ENCODE measurements at regions of chr5 and their contacts with region 1.

Region 1: GRCh38 chr5:59673438-59674058 is 220.0 kb downstream of the PDE4D start:
- DNase-seq: no peak
- ATAC-seq: no peak
- H3K4me3 ChIP-seq: no peak overlapping the region
- H3K27ac ChIP-seq: no peak overlapping the region
- H3K4me1 ChIP-seq: no peaks in the 10 kb centered on the region
- H3K27me3 ChIP-seq: no peaks in the 10 kb centered on the region
- CTCF ChIP-seq: peak; percentile 70 to 88 (median 84)

Region 2: GRCh38 chr5:59506285-59506877 is 167.2 kb before region 1 on chr5:
- intact Hi-C with region 1: loop called (anchors 1 to 10 kb)
- DNase-seq: no peak
- ATAC-seq: no peak
- H3K4me3 ChIP-seq: no peak overlapping the region
- H3K27ac ChIP-seq: no peak overlapping the region
- H3K4me1 ChIP-seq: no peaks in the 10 kb centered on the region
- H3K27me3 ChIP-seq: no peaks in the 10 kb centered on the region
- CTCF ChIP-seq: peak; percentile 28 to 78 (median 58)

Region 3: DNA sequence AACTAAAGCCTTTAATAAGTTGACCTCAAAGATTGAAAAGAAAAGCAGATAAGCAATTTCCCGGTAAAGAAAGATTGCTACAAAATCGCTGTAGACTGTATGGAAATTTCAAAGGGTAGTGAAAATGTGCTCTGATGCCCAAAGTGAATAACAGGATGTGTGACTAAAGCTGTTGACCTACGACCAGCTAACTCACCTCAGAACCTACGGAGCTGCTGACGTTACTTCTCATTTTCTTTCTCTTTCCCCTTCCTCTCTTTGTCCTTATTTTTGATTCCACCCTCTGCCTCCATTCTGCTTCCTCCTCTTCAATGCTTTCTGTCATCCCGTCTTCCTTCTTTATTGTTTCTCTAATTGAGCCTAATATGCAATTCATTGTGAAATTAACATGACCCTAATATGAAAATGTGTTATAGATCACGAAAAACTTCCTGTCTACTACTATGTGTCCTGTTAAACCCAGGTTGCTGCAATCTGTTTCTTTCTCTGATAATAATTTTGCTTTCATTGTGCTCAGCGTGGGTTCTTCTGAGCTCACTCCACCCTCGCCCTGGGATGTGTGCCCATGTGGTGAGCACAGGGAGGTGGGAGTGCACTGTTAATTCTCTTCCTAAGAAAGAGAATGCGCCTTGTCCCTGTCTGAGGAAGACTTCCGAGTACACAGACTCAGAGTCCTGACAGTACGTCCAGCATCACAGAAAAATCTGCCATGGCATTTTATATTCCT is 117.0 kb after region 1 on chr5:
- intact Hi-C with region 1: loop called in 7 of 10 experiments (anchors 5 to 10 kb)
- DNase-seq: no peak
- ATAC-seq: peak in 6 of 8 donors; percentile 38 to 91 (median 78)
- H3K4me3 ChIP-seq: peak overlapping the region in 4 of 10 donors; percentile 1 to 31 (median 8)
- H3K27ac ChIP-seq: peak overlapping the region in 9 of 10 donors; percentile 1 to 70 (median 49)
- H3K4me1 ChIP-seq: peaks cover 0 to 11% (median 0%) of the 10 kb centered on the region in 9 donors
- H3K27me3 ChIP-seq: peaks cover 0 to 12% (median 0%) of the 10 kb centered on the region in 7 donors
- CTCF ChIP-seq: no peak

Region 4: DNA sequence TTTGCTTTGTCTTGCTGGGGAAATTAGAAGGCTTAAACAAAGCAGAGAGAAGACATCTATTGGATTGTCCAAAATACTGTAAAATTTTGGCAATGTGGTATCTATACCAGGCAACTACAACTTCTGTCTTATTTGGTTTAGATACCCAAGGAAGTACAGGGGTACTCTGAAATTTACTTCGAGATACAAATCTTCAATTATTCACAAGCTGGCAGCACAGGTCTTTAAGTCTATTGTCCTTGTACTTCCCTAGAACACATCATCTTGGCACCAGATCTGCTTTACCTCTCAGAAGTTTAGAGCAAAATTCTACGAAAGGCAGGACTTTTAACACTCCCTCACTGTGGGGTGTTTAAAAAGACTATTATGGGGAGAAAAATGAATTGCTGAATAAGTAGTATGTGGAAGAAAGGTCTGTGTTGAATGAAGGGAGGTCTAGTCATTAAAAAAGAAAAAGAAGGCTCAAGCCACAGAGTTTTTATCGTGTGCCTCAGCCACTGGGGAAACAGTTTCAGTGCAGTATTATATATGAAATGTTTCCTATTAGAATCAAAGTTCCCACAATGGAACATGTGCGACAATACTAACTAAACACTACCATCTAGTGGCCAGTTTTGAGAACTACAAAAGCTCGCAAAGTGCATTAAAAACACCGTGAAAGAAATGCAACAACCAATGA is 126.3 kb after region 1 on chr5:
- intact Hi-C with region 1: loop called in 8 of 10 experiments (anchors 2 to 10 kb)
- DNase-seq: no peak
- ATAC-seq: peak in 7 of 8 donors; percentile 65 to 83 (median 75)
- H3K4me3 ChIP-seq: peak overlapping the region in 5 of 10 donors; percentile 2 to 30 (median 11)
- H3K27ac ChIP-seq: peak overlapping the region in 7 of 10 donors; percentile 1 to 43 (median 23)
- H3K4me1 ChIP-seq: peaks cover 0 to 28% (median 15%) of the 10 kb centered on the region in 9 donors
- H3K27me3 ChIP-seq: no peaks in the 10 kb centered on the region
- CTCF ChIP-seq: peak; percentile 57 to 86 (median 80)

Measured in heart right ventricle (tissue), 16 donors.